ENCODE measurements at regions of chr20 and their contacts with region 1.

Region 1: DNA sequence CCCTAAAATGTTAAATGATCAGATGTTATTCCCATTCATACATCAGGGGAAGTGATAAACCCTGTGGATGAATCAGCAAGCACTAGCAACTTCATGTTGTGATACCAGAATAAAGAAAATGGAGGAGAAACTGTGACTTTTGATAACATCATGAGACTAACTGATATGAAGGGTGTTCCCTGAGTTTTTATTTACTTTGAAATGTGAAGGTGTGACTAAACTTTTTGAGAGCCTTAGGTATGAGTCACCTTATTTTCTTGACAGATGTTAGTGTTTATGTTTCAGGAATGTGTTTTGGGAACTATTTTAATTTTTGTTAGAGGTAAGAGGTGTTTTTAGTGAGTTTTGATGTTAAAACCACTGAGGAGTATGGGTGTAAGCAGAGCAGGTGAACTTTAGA is 4.4 kb downstream of the PARD6B start:
- DNase-seq: no peak
- H3K4me3 ChIP-seq: no peak overlapping the region
- H3K27ac ChIP-seq: no peak overlapping the region
- H3K4me1 ChIP-seq: no peaks in the 10 kb centered on the region
- H3K27me3 ChIP-seq: no peaks in the 10 kb centered on the region
- CTCF ChIP-seq: no peak
- POLR2A ChIP-seq: no peak

Region 2: DNA sequence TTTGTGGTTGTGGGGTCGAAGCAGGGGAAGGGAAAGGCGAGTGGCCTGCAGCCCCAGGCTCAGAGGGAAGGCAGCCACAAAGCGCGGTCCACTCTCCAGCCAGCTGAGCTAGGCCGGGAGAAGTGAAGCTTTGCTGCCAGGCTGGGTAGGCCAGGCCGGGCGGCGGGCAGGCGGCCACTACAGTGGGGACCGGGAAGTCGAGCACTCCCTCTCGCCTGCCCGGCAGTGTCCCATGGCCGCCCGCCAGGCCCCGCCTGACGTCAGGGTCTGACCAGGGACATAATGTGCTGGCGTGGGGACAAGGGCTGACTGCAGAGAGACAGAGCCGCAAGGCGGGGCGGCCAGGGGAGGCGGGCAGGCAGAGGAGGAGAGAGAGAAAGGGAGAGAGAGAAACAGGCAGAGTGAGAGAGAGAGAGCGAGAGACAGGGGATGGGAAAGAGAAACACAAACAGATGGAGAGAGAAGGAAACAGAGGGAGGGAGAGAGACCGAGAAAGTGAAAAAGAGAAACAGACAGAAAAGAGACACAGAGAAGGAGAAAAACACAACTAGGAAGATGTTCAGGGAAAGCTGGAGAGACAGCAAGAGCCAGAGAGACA is 320.2 kb before region 1 on chr20:
- intact Hi-C with region 1: no loop called
- DNase-seq: peak; percentile 99
- H3K4me3 ChIP-seq: peak overlapping the region in 1 of 3 donors; percentile 44
- H3K27ac ChIP-seq: peak overlapping the region; percentile 98
- H3K4me1 ChIP-seq: peaks cover 13 to 21% of the 10 kb centered on the region in 2 donors
- H3K27me3 ChIP-seq: no peaks in the 10 kb centered on the region
- CTCF ChIP-seq: peak in 1 of 3 donors; percentile 22
- POLR2A ChIP-seq: no peak

Region 3: GRCh38 chr20:50551288-50551687 is 184.5 kb before region 1 on chr20:
- intact Hi-C with region 1: loop called (anchors 2 kb)
- DNase-seq: no peak
- H3K4me3 ChIP-seq: no peak overlapping the region
- H3K27ac ChIP-seq: no peak overlapping the region
- H3K4me1 ChIP-seq: no peaks in the 10 kb centered on the region
- H3K27me3 ChIP-seq: no peaks in the 10 kb centered on the region
- CTCF ChIP-seq: no peak
- POLR2A ChIP-seq: no peak